ENCODE measurements at regions of chr7 and their contacts with region 1.

Region 1: DNA sequence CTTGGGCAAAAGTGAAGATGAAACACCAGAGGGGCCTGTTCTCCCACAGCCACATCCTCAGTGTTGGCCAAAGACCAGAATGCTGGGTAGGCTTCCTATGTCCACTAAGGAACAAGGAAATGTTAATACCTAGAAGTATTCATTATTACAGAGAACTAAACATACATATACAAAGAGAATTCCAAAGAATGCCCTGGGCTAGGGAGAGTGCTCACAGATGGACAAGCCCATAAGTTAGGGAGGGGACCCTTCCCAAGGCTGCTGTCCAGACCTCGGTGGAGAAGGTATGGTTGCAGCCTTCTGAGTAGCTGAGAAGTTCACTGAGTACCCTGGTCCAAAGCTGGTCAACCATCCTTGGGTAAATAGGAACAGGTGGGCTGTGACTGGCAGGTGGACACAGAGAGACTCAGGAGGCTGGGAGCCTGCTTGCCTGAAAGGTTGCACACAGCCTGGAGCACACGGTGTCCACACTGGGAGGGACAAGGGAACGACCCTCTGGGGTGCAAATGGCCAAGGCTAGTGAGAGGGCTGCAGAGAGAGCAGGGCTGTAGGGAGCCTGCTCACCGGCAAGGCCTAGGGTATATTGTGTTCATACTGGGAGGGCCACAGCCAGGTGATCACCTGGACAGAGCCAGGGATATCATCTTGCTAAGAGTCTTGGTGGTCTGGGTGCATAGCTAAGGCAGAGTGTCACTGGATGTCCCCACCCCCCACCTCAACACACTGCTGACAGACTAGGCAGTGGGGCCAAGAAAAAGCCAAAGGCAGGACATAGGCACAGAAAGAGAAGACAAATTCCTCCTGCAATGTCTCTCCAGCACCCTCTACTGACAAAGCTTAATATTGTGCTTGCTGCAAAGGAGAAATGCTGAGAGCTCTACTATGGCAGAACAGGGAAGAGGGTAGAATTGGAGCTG is 40.3 kb downstream of the CPVL start:
- DNase-seq: no peak
- H3K4me3 ChIP-seq: no peak overlapping the region
- H3K27ac ChIP-seq: no peak overlapping the region
- H3K4me1 ChIP-seq: peaks cover 0 to 8% (median 4%) of the 10 kb centered on the region in 4 donors
- H3K27me3 ChIP-seq: no peaks in the 10 kb centered on the region
- CTCF ChIP-seq: peak; percentile 74 to 85 (median 78)
- EP300 ChIP-seq: no peak
- POLR2A ChIP-seq: no peak

Region 2: GRCh38 chr7:28921822-28922221 is 184.2 kb before region 1 on chr7:
- in situ Hi-C with region 1: loop called (anchors 5 to 10 kb)
- intact Hi-C with region 1: loop called (anchors 5 kb)
- DNase-seq: peak; percentile 40
- H3K4me3 ChIP-seq: no peak overlapping the region
- H3K27ac ChIP-seq: no peak overlapping the region
- H3K4me1 ChIP-seq: peaks cover 0 to 16% (median 6%) of the 10 kb centered on the region in 4 donors
- H3K27me3 ChIP-seq: no peaks in the 10 kb centered on the region
- CTCF ChIP-seq: peak; percentile 86 to 92 (median 88)
- EP300 ChIP-seq: no peak
- POLR2A ChIP-seq: no peak

Region 3: DNA sequence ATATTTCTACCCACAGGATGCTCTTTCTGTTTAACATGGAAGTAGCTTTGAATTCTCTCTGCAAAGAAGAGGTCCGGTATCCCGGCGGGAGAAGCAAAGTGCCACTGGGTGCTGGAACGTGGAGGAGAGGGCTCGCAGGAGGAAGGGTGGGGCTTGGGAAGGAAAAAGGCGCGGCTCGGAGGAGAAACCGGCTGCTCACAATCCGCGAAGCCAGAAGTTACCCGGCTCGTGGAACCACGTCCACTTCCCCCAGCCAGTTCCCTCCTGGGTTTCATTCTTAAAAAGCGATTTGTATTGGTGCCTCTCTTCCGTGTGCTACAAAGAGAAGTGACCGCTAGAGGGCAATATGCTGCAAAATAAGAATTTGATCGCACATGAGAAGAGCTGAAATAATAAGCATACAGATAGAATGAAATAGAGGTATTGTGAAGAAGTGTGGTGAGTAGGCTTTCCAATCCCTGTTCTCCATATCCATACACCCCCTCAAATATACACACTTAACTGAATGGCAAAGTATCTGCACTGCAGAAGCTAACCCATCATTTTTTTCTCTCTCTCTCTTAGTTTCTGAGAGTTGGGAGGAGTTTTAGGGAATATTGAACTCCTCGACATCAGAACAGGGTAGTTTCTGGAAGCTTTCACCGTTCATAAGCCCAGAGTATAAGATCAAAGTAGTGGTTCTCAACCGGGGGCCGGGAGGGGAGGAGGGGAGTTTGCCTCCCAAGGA is 179.0 kb before region 1 on chr7:
- in situ Hi-C with region 1: loop called (anchors 5 to 10 kb)
- intact Hi-C with region 1: loop called (anchors 5 kb)
- DNase-seq: peak; percentile 62
- H3K4me3 ChIP-seq: peak overlapping the region in 3 of 4 donors; percentile 34 to 59 (median 37)
- H3K27ac ChIP-seq: peak overlapping the region in 3 of 4 donors; percentile 18 to 47 (median 46)
- H3K4me1 ChIP-seq: peaks cover 0 to 15% (median 7%) of the 10 kb centered on the region in 4 donors
- H3K27me3 ChIP-seq: no peaks in the 10 kb centered on the region
- CTCF ChIP-seq: peak; percentile 75 to 82 (median 81)
- EP300 ChIP-seq: no peak
- POLR2A ChIP-seq: no peak